Activated CD4-positive, alpha-beta memory T cell treated with anti-CD3 and anti-CD28 coated beads, Interleukin-2, amount 10 ng/mL, durations not matched to agents 7 days and 5 days (primary cell): ENCODE measurements at regions of chr1 and their contacts with region 1.

Region 1: GRCh38 chr1:25810341-25811299 is 9.1 kb upstream of the MTFR1L start:
- DNase-seq: peak; percentile 81
- H3K4me3 Mint-ChIP-seq: no peak overlapping the region
- H3K27ac Mint-ChIP-seq: no peak overlapping the region
- H3K4me1 Mint-ChIP-seq: no peaks in the 10 kb centered on the region
- H3K27me3 Mint-ChIP-seq: no peaks in the 10 kb centered on the region

Region 2: GRCh38 chr1:25503551-25504426 is 306.8 kb before region 1 on chr1:
- CTCF ChIA-PET with region 1: interaction called, 13 read pairs
- POLR2A ChIA-PET with region 1: no interaction called
- DNase-seq: peak; percentile 66
- H3K4me3 Mint-ChIP-seq: no peak overlapping the region
- H3K27ac Mint-ChIP-seq: no peak overlapping the region
- H3K4me1 Mint-ChIP-seq: peaks cover 12% of the 10 kb centered on the region
- H3K27me3 Mint-ChIP-seq: peaks cover 5% of the 10 kb centered on the region

Region 3: DNA sequence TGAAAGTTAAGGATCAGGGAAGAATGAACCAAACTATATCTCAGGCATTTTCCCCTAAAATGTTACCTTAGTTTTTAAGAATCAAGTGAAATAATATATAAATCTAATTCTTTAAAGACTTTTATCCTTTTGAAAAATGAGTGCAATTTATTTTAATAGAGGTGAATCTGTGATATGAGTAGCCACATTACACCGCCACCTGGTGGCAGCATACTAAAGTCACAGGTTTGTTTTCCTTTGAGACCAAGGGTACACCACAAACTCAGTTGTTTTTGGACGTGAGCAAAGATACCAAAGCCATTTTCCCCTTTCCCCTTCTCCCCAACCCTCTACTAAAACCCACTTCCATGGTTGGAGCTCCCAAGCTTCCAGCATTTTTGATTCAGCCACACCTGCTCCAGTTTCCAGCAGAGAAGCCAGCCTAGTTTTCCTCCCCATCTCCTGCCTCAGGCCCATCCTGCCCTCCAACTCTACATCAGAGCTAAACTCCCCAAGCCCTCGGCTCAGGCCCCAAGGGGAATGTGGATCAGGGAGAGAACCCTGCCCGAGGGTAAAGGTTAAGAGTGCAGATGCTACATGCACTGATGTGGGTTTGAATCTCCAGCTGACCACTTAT is 290.1 kb before region 1 on chr1:
- CTCF ChIA-PET with region 1: interaction called, 11 read pairs
- POLR2A ChIA-PET with region 1: no interaction called
- DNase-seq: peak; percentile 76
- H3K4me3 Mint-ChIP-seq: no peak overlapping the region
- H3K27ac Mint-ChIP-seq: no peak overlapping the region
- H3K4me1 Mint-ChIP-seq: peaks cover 6% of the 10 kb centered on the region
- H3K27me3 Mint-ChIP-seq: peaks cover 6% of the 10 kb centered on the region

Region 4: DNA sequence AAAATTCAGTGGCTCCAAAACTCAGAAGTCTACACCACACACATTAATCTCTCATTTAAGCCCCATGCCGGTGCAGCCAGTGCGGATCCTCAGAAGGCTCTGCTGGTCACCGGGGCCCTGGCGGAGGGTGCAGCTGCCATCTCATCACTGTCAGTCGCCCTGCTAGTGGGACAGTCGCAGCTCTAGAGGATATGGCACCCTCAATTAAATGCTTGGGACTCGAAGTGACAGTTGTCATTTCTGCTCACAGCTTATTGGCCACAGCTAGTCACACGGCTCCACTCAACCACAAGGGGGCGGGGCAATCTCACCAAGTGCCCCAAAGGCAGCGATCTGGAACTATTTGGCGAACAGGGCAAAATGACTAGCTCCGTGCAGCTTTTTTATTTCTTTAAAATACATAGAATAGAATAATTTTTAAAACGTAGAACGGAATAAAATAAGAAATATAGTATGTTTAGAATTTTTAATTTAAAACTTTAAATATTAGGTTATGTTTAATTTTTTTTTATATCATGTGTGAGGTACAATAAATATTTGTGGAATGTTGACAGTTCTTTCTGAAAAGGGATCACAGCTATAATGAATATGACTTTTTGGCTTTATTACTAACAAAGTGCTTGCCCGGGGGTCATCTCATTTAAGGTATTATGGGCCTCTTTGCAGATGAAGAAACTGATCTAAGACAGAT is 202.0 kb before region 1 on chr1:
- CTCF ChIA-PET with region 1: interaction called, 30 read pairs
- POLR2A ChIA-PET with region 1: no interaction called
- DNase-seq: peak; percentile 91
- H3K4me3 Mint-ChIP-seq: no peak overlapping the region
- H3K27ac Mint-ChIP-seq: no peak overlapping the region
- H3K4me1 Mint-ChIP-seq: peaks cover 8% of the 10 kb centered on the region
- H3K27me3 Mint-ChIP-seq: peaks cover 69% of the 10 kb centered on the region